WTC11 (cell line): ENCODE measurements at regions of chr3 and their contacts with region 1.

Region 1: DNA sequence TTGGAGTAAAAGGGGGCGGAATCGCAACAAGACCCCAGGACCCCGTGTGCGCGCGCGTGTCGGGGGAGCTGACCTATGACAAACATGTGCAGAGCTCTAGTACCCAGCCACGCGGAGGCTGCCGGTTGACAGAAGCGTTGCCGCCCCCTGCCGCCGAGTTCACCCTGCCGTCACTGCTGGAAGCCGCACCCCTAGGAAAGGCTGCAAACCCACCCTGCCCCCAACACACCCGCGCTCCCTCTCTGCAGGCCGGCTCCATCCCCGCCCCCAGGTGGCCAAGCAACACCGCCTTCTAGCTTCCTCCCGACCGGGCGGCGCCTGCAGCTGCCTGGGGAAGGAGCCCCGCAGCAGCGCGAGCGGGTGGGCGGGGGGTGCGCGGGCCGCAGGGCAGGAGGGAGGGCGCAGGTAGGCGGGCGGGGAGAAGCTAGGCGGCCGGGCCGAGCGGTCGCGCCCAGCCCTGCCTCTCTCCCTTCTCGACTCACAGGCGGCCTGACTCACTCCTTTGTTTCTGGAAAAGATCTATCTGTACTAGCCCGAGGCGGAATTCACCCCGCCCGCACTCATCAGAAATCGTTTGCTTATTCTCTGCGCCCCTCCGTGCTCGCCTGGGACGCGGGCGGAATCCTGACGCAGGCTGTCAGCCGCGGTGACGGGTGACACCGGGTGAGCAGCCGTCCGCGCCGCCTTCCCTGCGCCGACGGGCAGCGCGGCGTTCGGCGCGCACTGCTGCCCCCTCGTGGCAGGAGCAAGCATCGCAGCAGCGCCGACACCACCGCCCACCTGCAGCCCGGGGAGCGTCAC is 160.8 kb downstream of the GAP43 start:
- DNase-seq: peak; percentile 86
- ATAC-seq: peak; percentile 87
- H3K4me3 Mint-ChIP-seq: peak overlapping the region; percentile 90
- H3K27ac Mint-ChIP-seq: peak overlapping the region; percentile 51; the same call in 1 of the 2 replicates
- H3K4me1 Mint-ChIP-seq: peaks cover 14% of the 10 kb centered on the region
- H3K27me3 Mint-ChIP-seq: no peaks in the 10 kb centered on the region
- CTCF ChIP-seq: peak; percentile 97

Region 2: GRCh38 chr3:114566162-114566755 is 1217.9 kb before region 1 on chr3:
- CTCF ChIA-PET with region 1: no interaction called
- POLR2A ChIA-PET with region 1: no interaction called
- DNase-seq: no peak
- ATAC-seq: peak; percentile 82
- H3K4me3 Mint-ChIP-seq: no peak overlapping the region
- H3K27ac Mint-ChIP-seq: peak overlapping the region; percentile 79
- H3K4me1 Mint-ChIP-seq: peaks cover 47% of the 10 kb centered on the region
- H3K27me3 Mint-ChIP-seq: no peaks in the 10 kb centered on the region
- CTCF ChIP-seq: no peak

Region 3: DNA sequence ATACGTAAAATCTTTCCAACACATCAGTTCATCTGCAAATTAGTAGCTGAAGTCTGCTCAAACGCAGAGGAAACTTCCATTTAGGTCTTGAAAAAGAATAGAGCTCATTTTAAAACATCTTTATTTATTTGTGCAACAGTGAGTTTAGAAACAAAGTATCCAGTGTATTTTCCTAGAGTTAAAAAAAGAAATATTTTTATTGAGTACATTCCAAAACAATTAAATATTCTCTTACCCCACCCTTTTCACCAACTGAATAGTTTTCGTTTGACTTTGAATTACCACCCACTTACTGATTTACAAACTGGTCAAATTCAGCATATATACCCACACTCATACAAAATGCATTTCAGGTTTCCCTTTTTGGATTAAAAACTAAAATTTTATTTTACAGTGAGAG is 741.8 kb before region 1 on chr3:
- CTCF ChIA-PET with region 1: interaction called, 10 read pairs
- POLR2A ChIA-PET with region 1: no interaction called
- DNase-seq: no peak
- ATAC-seq: no peak
- H3K4me3 Mint-ChIP-seq: no peak overlapping the region
- H3K27ac Mint-ChIP-seq: no peak overlapping the region
- H3K4me1 Mint-ChIP-seq: peaks cover 8% of the 10 kb centered on the region; the same call in 1 of the 2 replicates
- H3K27me3 Mint-ChIP-seq: no peaks in the 10 kb centered on the region
- CTCF ChIP-seq: no peak

Region 4: GRCh38 chr3:115692887-115693524 is 91.1 kb before region 1 on chr3:
- CTCF ChIA-PET with region 1: interaction called, 16 read pairs
- POLR2A ChIA-PET with region 1: no interaction called
- DNase-seq: peak; percentile 80
- ATAC-seq: peak; percentile 94
- H3K4me3 Mint-ChIP-seq: no peak overlapping the region
- H3K27ac Mint-ChIP-seq: no peak overlapping the region
- H3K4me1 Mint-ChIP-seq: peaks cover 25% of the 10 kb centered on the region
- H3K27me3 Mint-ChIP-seq: no peaks in the 10 kb centered on the region
- CTCF ChIP-seq: peak; percentile 64

Region 5: GRCh38 chr3:115760716-115761115 is 23.4 kb before region 1 on chr3:
- CTCF ChIA-PET with region 1: interaction called, 30 read pairs
- POLR2A ChIA-PET with region 1: no interaction called
- DNase-seq: no peak
- ATAC-seq: no peak
- H3K4me3 Mint-ChIP-seq: no peak overlapping the region
- H3K27ac Mint-ChIP-seq: no peak overlapping the region
- H3K4me1 Mint-ChIP-seq: no peaks in the 10 kb centered on the region
- H3K27me3 Mint-ChIP-seq: no peaks in the 10 kb centered on the region
- CTCF ChIP-seq: no peak

Region 6: GRCh38 chr3:115766587-115767480 is 17.3 kb before region 1 on chr3:
- CTCF ChIA-PET with region 1: interaction called, 30 read pairs
- POLR2A ChIA-PET with region 1: no interaction called
- DNase-seq: no peak
- ATAC-seq: peak; percentile 51
- H3K4me3 Mint-ChIP-seq: no peak overlapping the region
- H3K27ac Mint-ChIP-seq: no peak overlapping the region
- H3K4me1 Mint-ChIP-seq: peaks cover 12% of the 10 kb centered on the region
- H3K27me3 Mint-ChIP-seq: no peaks in the 10 kb centered on the region
- CTCF ChIP-seq: no peak

Region 7: GRCh38 chr3:115804722-115805121 is 20.6 kb after region 1 on chr3:
- CTCF ChIA-PET with region 1: interaction called, 13 read pairs
- POLR2A ChIA-PET with region 1: no interaction called
- DNase-seq: no peak
- ATAC-seq: no peak
- H3K4me3 Mint-ChIP-seq: no peak overlapping the region
- H3K27ac Mint-ChIP-seq: peak overlapping the region; percentile 47; the same call in 1 of the 2 replicates
- H3K4me1 Mint-ChIP-seq: peaks cover 60% of the 10 kb centered on the region
- H3K27me3 Mint-ChIP-seq: 0 out of 2 replicates have a peak, but pooled peaks cover 4% of the 10 kb centered on the region
- CTCF ChIP-seq: no peak

Region 8: DNA sequence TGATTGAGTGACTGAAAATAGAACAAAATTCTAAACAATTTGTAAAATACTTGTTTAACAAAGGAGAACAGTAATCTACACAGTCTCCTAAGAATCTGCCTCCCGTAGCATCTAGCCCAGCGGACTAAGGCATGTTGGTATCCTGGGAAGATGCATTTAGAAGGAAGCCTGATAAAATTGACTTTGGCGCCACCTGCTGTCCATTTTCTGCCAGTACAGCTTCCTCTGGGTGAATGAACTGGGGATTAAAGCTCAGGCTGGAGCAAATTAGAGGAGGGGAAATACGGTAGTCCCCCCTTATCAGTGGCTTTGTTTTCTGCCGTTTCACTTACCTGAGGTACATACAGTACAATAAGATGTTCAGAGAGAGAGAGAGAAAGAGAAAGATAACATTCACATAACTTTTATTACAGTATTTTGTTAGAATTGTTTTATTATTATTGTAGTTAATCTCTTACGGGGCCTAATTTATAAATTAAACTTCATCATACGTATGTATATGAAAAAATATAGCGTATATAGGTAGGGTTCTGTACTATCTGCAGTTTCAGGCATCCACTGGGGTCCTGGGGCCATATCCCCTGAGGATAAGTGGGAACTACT is 30.7 kb after region 1 on chr3:
- CTCF ChIA-PET with region 1: interaction called, 27 read pairs
- POLR2A ChIA-PET with region 1: no interaction called
- DNase-seq: peak; percentile 87
- ATAC-seq: peak; percentile 91
- H3K4me3 Mint-ChIP-seq: no peak overlapping the region
- H3K27ac Mint-ChIP-seq: no peak overlapping the region
- H3K4me1 Mint-ChIP-seq: peaks cover 11% of the 10 kb centered on the region
- H3K27me3 Mint-ChIP-seq: no peaks in the 10 kb centered on the region
- CTCF ChIP-seq: peak; percentile 94